ENCODE measurements at regions of chr5 and their contacts with region 1.

Region 1: GRCh38 chr5:159156426-159157238 is 52.7 kb downstream of the RNF145 start:
- DNase-seq: no peak
- ATAC-seq: peak; percentile 53
- H3K4me3 Mint-ChIP-seq: peak overlapping the region; percentile 50
- H3K27ac Mint-ChIP-seq: peak overlapping the region; percentile 85
- H3K4me1 Mint-ChIP-seq: peaks cover 36% of the 10 kb centered on the region
- H3K27me3 Mint-ChIP-seq: no peaks in the 10 kb centered on the region
- CTCF ChIP-seq: peak; percentile 78

Region 2: GRCh38 chr5:159017786-159018185 is 138.8 kb before region 1 on chr5:
- CTCF ChIA-PET with region 1: no interaction called
- POLR2A ChIA-PET with region 1: no interaction called
- intact Hi-C with region 1: no loop called
- DNase-seq: no peak
- ATAC-seq: no peak
- H3K4me3 Mint-ChIP-seq: peak overlapping the region; percentile 7
- H3K27ac Mint-ChIP-seq: no peak overlapping the region
- H3K4me1 Mint-ChIP-seq: peaks cover 79% of the 10 kb centered on the region
- H3K27me3 Mint-ChIP-seq: no peaks in the 10 kb centered on the region
- CTCF ChIP-seq: no peak

Region 3: GRCh38 chr5:159073026-159073425 is 83.6 kb before region 1 on chr5:
- CTCF ChIA-PET with region 1: no interaction called
- POLR2A ChIA-PET with region 1: no interaction called
- intact Hi-C with region 1: no loop called
- DNase-seq: no peak
- ATAC-seq: no peak
- H3K4me3 Mint-ChIP-seq: no peak overlapping the region
- H3K27ac Mint-ChIP-seq: no peak overlapping the region
- H3K4me1 Mint-ChIP-seq: peaks cover 49% of the 10 kb centered on the region
- H3K27me3 Mint-ChIP-seq: no peaks in the 10 kb centered on the region
- CTCF ChIP-seq: no peak

Region 4: GRCh38 chr5:159209438-159210305 is 53.0 kb after region 1 on chr5 and contains the start of gene RNF145:
- CTCF ChIA-PET with region 1: interaction called, 20 read pairs
- POLR2A ChIA-PET with region 1: interaction called, 23 read pairs
- intact Hi-C with region 1: loop called (anchors 1 kb)
- DNase-seq: peak; percentile 93
- ATAC-seq: peak; percentile 79
- H3K4me3 Mint-ChIP-seq: peak within 1 kb of the TSS; percentile 97
- H3K27ac Mint-ChIP-seq: peak within 1 kb of the TSS; percentile 96
- H3K4me1 Mint-ChIP-seq: peaks cover 57% of the 10 kb centered on the region
- H3K27me3 Mint-ChIP-seq: no peaks in the 10 kb centered on the region
- CTCF ChIP-seq: no peak
- total RNA-seq, gene RNF145: 66.1 and 79.1 TPM in 2 replicates

Region 5: DNA sequence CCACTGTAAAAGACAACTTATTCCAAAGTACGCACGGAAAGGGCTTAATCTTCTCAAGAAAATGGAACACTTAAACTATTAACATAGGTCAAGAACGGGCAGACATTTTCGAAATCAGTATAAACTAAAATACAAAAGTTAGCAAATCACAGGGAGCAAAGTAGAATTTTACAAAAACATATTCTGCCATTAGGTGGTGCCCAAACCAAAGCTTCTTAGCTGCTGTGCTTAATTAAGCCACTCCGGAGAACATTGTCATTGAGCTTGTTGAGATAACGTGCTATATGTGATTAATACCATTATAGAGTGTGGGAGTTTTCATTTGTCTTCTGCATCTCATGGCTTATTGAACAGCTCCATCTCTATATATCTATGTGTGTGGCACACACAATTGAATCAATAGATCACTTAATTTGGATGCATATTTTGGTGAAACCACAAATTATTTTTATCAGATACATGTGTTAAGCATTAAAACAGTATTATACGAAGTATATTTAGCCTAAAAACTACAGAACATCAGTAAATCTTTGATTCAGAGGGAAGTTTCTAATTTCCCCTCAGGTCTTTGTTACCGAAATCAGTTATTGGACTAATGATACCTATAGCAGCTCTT is 129.9 kb after region 1 on chr5:
- CTCF ChIA-PET with region 1: interaction called, 45 read pairs
- POLR2A ChIA-PET with region 1: no interaction called
- intact Hi-C with region 1: loop called (anchors 1 kb)
- DNase-seq: no peak
- ATAC-seq: peak; percentile 71
- H3K4me3 Mint-ChIP-seq: no peak overlapping the region
- H3K27ac Mint-ChIP-seq: no peak overlapping the region
- H3K4me1 Mint-ChIP-seq: no peaks in the 10 kb centered on the region
- H3K27me3 Mint-ChIP-seq: no peaks in the 10 kb centered on the region
- CTCF ChIP-seq: no peak

Region 6: GRCh38 chr5:159773062-159773924 is 616.7 kb after region 1 on chr5:
- CTCF ChIA-PET with region 1: no interaction called
- POLR2A ChIA-PET with region 1: no interaction called
- intact Hi-C with region 1: loop called (anchors 1 kb)
- DNase-seq: peak; percentile 78
- ATAC-seq: peak; percentile 95
- H3K4me3 Mint-ChIP-seq: peak overlapping the region; percentile 74
- H3K27ac Mint-ChIP-seq: peak overlapping the region; percentile 56
- H3K4me1 Mint-ChIP-seq: peaks cover 12% of the 10 kb centered on the region
- H3K27me3 Mint-ChIP-seq: peaks cover 14% of the 10 kb centered on the region
- CTCF ChIP-seq: no peak

Region 7: DNA sequence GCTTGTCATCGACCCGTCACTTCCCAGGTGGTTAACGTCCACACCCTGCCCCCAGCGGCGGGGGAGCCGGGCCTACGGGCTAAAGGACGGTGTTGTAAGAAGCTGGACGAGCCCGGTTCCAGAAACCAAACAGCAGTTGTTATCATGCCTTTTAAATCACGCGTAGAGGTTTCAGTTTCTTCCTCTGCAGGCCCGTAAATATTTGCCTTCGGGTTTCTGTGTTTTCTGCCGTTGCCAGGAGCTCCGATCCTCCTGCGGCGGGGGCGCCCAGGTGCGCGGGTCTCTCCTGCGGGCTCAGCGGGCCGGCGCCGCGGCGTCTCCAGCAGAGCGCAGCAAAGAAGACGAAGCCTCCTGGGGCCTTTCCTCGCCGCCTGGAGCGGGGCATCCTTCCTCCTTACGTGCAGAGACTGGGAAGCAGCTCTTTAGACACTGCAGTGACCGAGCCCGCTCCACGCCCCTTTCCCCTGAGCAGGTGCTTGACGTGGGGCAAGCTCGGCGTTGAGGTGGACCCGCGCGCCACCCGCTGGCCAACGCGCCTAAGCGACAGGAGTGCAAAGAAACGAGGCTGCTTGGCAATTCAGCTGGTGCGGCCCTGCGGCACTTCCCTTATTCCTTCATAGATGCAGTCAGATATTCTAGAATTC is 830.5 kb after region 1 on chr5:
- CTCF ChIA-PET with region 1: interaction called, 34 read pairs
- POLR2A ChIA-PET with region 1: no interaction called
- intact Hi-C with region 1: loop called (anchors 1 kb)
- DNase-seq: peak; percentile 72
- ATAC-seq: peak; percentile 99
- H3K4me3 Mint-ChIP-seq: peak overlapping the region; percentile 70
- H3K27ac Mint-ChIP-seq: no peak overlapping the region
- H3K4me1 Mint-ChIP-seq: peaks cover 7% of the 10 kb centered on the region
- H3K27me3 Mint-ChIP-seq: peaks cover 14% of the 10 kb centered on the region
- CTCF ChIP-seq: no peak

Measured in activated B cell treated with CpG ODN at 0.5 μM for 24 hours (primary cell).